Adrenal gland (tissue), 19 donors: ENCODE measurements at regions of chr3 and their contacts with region 1.

Region 1: DNA sequence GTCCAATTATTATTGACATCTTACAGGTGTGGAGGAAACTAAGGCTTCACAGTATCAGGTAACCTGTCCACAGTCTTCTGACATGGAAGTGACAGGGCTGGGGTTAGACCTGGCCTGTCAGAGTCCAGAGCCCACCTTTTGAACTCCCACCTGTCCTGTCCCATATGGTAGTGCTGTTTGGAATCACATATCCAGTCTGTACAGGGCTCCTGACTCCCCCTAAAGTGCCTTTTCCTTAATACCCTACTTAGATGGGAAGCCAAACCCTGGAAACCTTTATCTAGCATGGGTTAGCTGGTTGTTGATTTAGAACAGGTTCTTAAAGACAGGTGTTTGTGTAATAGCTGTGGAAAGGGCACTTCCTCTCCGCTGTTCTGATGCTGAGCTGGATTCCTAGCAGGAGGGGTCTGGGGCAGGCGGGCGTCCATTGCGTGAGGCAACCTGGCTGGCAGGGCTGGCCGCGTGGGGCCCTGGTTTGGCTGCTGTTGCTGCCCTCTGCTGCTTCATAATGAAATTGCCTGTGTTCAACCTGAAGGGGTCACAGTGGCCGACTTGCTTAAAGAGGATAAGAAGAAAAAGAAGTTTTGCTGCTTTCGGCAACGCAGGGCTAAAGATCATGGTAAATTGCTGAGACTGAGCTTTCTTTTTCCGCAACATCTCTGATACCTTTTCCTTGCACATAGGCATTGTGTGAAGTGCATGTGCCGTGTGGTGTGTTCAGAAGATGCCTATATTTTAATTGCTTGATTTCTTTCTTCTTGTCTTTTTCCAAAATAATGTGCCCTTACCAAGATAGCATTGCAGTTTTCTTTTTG is 136.2 kb downstream of the CHDH start:
- DNase-seq: peak; percentile 69 to 89 (median 75)
- H3K4me3 ChIP-seq: no peak overlapping the region
- H3K27ac ChIP-seq: peak overlapping the region in 1 of 5 donors; percentile 27
- H3K4me1 ChIP-seq: peaks cover 0 to 33% of the 10 kb centered on the region in 2 donors
- H3K27me3 ChIP-seq: no peaks in the 10 kb centered on the region
- CTCF ChIP-seq: peak; percentile 76 to 89 (median 84)
- POLR2A ChIP-seq: no peak

Region 2: DNA sequence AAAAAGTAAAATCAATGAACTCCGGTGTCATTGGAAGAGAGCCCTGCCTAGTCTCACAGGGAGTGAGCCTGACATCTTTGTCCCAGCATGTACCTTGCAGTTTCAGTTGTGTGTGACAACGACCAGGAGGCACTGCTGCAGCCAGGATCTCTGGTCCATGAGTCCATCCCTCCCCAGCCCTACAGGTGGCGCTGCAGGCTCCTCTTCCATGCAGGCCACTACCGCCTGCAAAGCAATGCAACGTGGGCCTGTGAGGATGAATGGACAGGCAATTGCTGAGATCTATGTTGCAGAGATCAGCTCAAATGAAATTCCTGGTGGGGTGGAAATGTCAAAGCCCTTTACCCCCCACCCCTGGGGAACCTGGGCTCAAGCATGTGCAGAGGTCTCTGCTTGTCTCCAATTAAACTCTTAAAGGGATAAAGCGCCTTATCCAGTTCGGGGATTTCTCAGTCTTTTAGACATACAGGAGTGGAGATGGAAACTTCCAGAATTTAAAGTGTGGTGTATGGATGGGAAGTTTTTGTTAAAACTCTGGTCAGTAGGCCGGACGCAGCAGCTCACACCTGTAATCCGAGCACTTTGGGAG is 490.1 kb before region 1 on chr3:
- intact Hi-C with region 1: loop called in 1 of 2 experiments (anchors 10 kb)
- DNase-seq: peak; percentile 86 to 95 (median 90)
- H3K4me3 ChIP-seq: no peak overlapping the region
- H3K27ac ChIP-seq: no peak overlapping the region
- H3K4me1 ChIP-seq: no peaks in the 10 kb centered on the region
- H3K27me3 ChIP-seq: no peaks in the 10 kb centered on the region
- CTCF ChIP-seq: peak; percentile 87 to 95 (median 92)
- POLR2A ChIP-seq: no peak

Region 3: DNA sequence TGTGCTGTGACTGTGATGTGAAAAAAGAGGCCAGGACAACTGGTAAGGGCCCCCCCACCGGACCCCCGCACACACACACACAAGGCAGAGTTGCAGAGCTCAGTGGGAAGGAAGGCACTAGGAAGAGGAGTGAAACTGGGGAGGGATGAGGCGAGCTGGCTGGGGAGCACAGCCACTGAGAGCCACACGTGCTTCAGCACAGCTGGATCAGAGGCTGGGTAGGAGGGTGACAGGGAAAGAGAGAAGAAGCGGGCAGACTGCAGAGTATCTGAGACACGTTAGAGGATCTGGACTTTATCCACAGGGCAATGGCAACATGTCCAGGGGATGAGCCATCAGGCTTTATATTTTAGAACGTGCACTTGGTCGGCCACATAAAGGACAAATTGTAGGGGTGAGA is 416.2 kb before region 1 on chr3:
- intact Hi-C with region 1: loop called (anchors 10 kb)
- DNase-seq: no peak
- H3K4me3 ChIP-seq: no peak overlapping the region
- H3K27ac ChIP-seq: no peak overlapping the region
- H3K4me1 ChIP-seq: peaks cover 8 to 15% of the 10 kb centered on the region in 2 donors
- H3K27me3 ChIP-seq: no peaks in the 10 kb centered on the region
- CTCF ChIP-seq: no peak
- POLR2A ChIP-seq: no peak

Region 4: GRCh38 chr3:53375019-53375418 is 335.0 kb before region 1 on chr3:
- intact Hi-C with region 1: loop called (anchors 5 to 10 kb)
- DNase-seq: peak; percentile 83 to 87 (median 83)
- H3K4me3 ChIP-seq: no peak overlapping the region
- H3K27ac ChIP-seq: no peak overlapping the region
- H3K4me1 ChIP-seq: no peaks in the 10 kb centered on the region
- H3K27me3 ChIP-seq: no peaks in the 10 kb centered on the region
- CTCF ChIP-seq: peak; percentile 77 to 95 (median 90)
- POLR2A ChIP-seq: no peak

Region 5: DNA sequence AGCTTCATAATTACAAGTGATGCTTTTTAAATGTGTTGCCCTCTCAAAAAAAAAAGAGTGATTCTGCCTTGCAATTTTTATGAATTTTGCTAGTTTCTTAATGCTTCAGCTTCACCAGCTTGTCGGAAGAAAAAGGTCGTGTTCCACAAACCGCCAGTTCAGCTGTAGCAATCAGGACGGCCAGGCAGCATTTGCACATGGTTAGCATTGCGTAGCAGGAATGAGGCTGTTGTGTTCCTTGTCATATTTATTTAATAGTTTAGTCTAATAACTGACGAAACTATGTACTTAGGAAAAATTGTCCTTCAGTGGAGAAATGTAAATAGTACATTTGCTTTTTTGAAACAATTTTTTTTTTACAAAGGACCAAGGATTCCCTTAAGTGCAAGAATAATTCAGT is 246.5 kb after region 1 on chr3:
- intact Hi-C with region 1: no loop called
- DNase-seq: no peak
- H3K4me3 ChIP-seq: no peak overlapping the region
- H3K27ac ChIP-seq: no peak overlapping the region
- H3K4me1 ChIP-seq: no peaks in the 10 kb centered on the region
- H3K27me3 ChIP-seq: no peaks in the 10 kb centered on the region
- CTCF ChIP-seq: no peak
- POLR2A ChIP-seq: no peak